ENCODE measurements at regions of chr20 and their contacts with region 1.

Region 1: DNA sequence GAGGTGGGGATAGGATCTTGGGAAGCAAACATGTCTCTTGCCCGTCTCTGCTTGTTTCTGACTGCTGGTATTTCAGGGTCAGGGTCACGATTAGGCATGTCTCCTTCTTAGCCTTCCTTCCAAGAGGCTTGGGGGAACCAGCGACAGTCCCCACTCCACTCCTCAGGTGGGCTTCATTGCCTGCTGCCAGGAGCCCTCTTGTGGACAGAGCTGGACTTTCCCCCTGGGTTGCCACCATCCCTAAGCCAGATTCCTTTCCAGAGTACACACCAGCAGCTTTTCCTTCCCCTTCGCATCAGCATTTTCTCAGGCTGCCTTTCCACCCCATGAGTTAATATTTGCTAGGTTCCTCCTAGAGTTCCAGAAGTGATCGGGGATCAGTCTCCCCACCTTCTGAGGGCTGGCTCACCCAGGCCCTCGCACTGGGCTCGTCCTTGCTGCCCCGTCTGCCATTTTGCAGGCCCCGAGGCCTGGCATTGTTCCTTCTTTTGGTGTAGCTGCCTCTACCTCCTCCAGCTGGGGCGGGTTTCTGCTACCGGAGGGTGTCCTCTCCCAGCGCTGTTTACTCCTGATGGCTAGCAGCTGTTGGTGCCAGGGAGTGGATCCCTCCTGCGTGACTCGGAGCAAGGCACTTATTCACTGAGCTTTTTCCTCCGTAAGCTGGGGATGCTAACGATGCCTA is 8.8 kb upstream of the C20orf144 start:
- DNase-seq: peak; percentile 66
- ATAC-seq: peak; percentile 82
- H3K4me3 ChIP-seq: no peak overlapping the region
- H3K27ac ChIP-seq: no peak overlapping the region
- H3K4me1 ChIP-seq: peaks cover 3% of the 10 kb centered on the region; the same call in 1 of the 2 replicates
- H3K27me3 ChIP-seq: no peaks in the 10 kb centered on the region
- CTCF ChIP-seq: peak; percentile 83
- POLR2A ChIP-seq: no peak
- RAD21 ChIP-seq: peak; percentile 87

Region 2: GRCh38 chr20:33318096-33318429 is 335.3 kb before region 1 on chr20:
- CTCF ChIA-PET with region 1: no interaction called
- POLR2A ChIA-PET with region 1: no interaction called
- dilution Hi-C with region 1: no loop called
- in situ Hi-C with region 1: no loop called
- intact Hi-C with region 1: no loop called
- DNase-seq: no peak
- ATAC-seq: no peak
- H3K4me3 ChIP-seq: no peak overlapping the region
- H3K27ac ChIP-seq: no peak overlapping the region
- H3K4me1 ChIP-seq: no peaks in the 10 kb centered on the region
- H3K27me3 ChIP-seq: peaks cover 39% of the 10 kb centered on the region
- CTCF ChIP-seq: no peak
- POLR2A ChIP-seq: no peak
- RAD21 ChIP-seq: no peak

Region 3: DNA sequence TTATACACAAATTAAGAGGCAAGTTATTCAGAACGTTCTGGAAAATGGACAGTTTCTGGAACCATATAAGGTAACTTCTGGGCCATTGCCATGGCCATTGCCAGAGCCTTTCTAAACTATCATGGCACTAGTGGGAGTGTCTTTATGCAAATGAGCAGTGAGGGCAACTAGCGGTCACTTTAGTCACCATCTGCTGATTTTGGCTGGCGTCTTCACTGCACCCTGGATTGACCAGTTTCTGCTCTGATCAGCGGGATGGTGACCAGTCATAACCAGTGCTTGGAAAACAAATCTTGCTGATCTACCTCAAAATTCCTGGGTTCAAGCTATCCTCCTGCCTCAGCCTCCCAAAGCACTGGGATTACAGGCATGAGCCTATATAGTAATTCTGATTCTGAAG is 202.5 kb before region 1 on chr20:
- CTCF ChIA-PET with region 1: interaction called, 4 read pairs
- POLR2A ChIA-PET with region 1: no interaction called
- dilution Hi-C with region 1: no loop called
- in situ Hi-C with region 1: loop called (anchors 5 kb)
- intact Hi-C with region 1: no loop called
- DNase-seq: peak; percentile 40
- ATAC-seq: peak; percentile 56
- H3K4me3 ChIP-seq: no peak overlapping the region
- H3K27ac ChIP-seq: no peak overlapping the region
- H3K4me1 ChIP-seq: no peaks in the 10 kb centered on the region
- H3K27me3 ChIP-seq: no peaks in the 10 kb centered on the region
- CTCF ChIP-seq: no peak
- POLR2A ChIP-seq: no peak
- RAD21 ChIP-seq: no peak

Region 4: DNA sequence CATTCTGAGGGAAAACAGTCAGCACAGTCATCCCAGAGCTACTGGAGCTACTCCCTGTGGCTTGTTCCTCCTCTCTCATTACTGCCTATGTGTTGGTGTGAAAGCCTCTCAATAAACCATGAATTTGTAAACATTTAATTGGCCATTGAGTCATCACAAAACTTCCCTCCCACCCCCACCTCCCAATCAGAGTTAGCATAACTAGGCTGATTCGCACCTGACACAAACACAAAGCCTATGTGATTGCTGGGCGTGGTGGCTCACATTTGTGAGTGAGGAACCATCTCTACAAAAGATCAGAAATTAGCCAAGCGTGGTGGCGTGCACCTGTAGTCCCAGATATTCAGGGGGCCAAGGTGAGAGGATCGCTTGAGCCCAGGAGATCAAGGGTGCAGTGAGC is 192.6 kb before region 1 on chr20:
- CTCF ChIA-PET with region 1: interaction called, 4 read pairs
- POLR2A ChIA-PET with region 1: no interaction called
- dilution Hi-C with region 1: no loop called
- in situ Hi-C with region 1: no loop called
- intact Hi-C with region 1: loop called (anchors 1 kb)
- DNase-seq: no peak
- ATAC-seq: no peak
- H3K4me3 ChIP-seq: no peak overlapping the region
- H3K27ac ChIP-seq: no peak overlapping the region
- H3K4me1 ChIP-seq: no peaks in the 10 kb centered on the region
- H3K27me3 ChIP-seq: no peaks in the 10 kb centered on the region; the same call in 1 of the 2 replicates
- CTCF ChIP-seq: no peak
- POLR2A ChIP-seq: no peak
- RAD21 ChIP-seq: no peak